B cell (primary cell): ENCODE measurements at regions of chr10 and their contacts with region 1.

Region 1: GRCh38 chr10:48634198-48634983 is 29.5 kb upstream of the ARHGAP22 start:
- DNase-seq: peak; percentile 86
- ATAC-seq: peak; percentile 100
- H3K4me3 ChIP-seq: peak overlapping the region in 2 of 5 experiments; percentile 7 to 25
- H3K4me3 Mint-ChIP-seq: peak overlapping the region; percentile 80
- H3K27ac ChIP-seq: no peak overlapping the region
- H3K27ac Mint-ChIP-seq: peak overlapping the region; percentile 47
- H3K4me1 ChIP-seq: peaks cover 37 to 40% of the 10 kb centered on the region in 2 donors
- H3K4me1 Mint-ChIP-seq: peaks cover 42% of the 10 kb centered on the region
- H3K27me3 ChIP-seq: peaks cover 0 to 31% (median 16%) of the 10 kb centered on the region in 4 experiments
- H3K27me3 Mint-ChIP-seq: peaks cover 33% of the 10 kb centered on the region
- CTCF ChIP-seq: no peak

Region 2: DNA sequence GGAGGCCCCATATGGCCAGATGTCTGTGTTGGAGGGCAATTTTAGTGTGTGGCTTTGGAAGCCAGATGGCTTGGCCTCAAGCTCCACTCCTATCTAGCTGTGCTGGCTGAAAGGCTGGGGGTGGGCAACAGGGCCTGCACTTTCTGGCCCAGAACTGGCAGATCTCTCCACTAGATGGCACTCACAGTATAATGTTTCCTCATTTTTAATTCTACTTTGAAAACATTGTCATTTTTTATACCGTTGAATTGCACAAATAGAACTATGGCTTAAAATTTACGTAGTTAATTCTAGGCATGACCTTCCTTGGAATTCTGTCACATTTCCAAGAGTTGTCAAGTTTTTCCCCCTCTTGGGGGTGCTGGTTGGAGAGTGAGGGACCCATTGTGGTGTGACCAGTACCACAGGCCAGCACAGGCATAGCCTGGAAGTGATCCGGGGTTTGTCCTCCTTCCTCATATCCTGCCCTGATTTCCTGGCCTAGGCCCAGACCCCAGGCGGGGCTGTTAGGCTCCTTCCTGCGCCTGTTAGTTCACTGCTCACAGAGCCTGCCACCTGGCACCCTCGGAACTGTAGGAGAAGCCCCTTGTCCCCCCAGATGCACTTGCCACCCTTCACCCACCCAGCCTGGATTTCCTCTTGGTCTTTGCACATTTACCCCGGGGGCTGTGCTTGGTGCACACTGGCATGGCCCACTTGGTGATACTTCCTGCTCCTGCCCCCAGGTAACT is 82.4 kb before region 1 on chr10:
- CTCF ChIA-PET with region 1: interaction called, 12 read pairs
- POLR2A ChIA-PET with region 1: no interaction called
- intact Hi-C with region 1: no loop called
- DNase-seq: peak; percentile 79
- ATAC-seq: peak; percentile 82
- H3K4me3 ChIP-seq: no peak overlapping the region
- H3K4me3 Mint-ChIP-seq: no peak overlapping the region
- H3K27ac ChIP-seq: no peak overlapping the region
- H3K27ac Mint-ChIP-seq: no peak overlapping the region
- H3K4me1 ChIP-seq: peaks cover 10 to 13% of the 10 kb centered on the region in 2 donors
- H3K4me1 Mint-ChIP-seq: peaks cover 14% of the 10 kb centered on the region
- H3K27me3 ChIP-seq: peaks cover 0 to 6% (median 0%) of the 10 kb centered on the region in 4 experiments
- H3K27me3 Mint-ChIP-seq: peaks cover 7% of the 10 kb centered on the region
- CTCF ChIP-seq: peak; percentile 94

Region 3: GRCh38 chr10:48577158-48577557 is 57.2 kb before region 1 on chr10:
- CTCF ChIA-PET with region 1: interaction called, 5 read pairs
- POLR2A ChIA-PET with region 1: interaction called, 5 read pairs
- intact Hi-C with region 1: loop called (anchors 1 kb)
- DNase-seq: peak; percentile 82
- ATAC-seq: peak; percentile 69
- H3K4me3 ChIP-seq: no peak overlapping the region
- H3K4me3 Mint-ChIP-seq: peak overlapping the region; percentile 58
- H3K27ac ChIP-seq: peak overlapping the region; percentile 91 to 94
- H3K27ac Mint-ChIP-seq: peak overlapping the region; percentile 85
- H3K4me1 ChIP-seq: peaks cover 73 to 85% of the 10 kb centered on the region in 2 donors
- H3K4me1 Mint-ChIP-seq: peaks cover 93% of the 10 kb centered on the region
- H3K27me3 ChIP-seq: no peaks in the 10 kb centered on the region
- H3K27me3 Mint-ChIP-seq: no peaks in the 10 kb centered on the region
- CTCF ChIP-seq: no peak

Region 4: DNA sequence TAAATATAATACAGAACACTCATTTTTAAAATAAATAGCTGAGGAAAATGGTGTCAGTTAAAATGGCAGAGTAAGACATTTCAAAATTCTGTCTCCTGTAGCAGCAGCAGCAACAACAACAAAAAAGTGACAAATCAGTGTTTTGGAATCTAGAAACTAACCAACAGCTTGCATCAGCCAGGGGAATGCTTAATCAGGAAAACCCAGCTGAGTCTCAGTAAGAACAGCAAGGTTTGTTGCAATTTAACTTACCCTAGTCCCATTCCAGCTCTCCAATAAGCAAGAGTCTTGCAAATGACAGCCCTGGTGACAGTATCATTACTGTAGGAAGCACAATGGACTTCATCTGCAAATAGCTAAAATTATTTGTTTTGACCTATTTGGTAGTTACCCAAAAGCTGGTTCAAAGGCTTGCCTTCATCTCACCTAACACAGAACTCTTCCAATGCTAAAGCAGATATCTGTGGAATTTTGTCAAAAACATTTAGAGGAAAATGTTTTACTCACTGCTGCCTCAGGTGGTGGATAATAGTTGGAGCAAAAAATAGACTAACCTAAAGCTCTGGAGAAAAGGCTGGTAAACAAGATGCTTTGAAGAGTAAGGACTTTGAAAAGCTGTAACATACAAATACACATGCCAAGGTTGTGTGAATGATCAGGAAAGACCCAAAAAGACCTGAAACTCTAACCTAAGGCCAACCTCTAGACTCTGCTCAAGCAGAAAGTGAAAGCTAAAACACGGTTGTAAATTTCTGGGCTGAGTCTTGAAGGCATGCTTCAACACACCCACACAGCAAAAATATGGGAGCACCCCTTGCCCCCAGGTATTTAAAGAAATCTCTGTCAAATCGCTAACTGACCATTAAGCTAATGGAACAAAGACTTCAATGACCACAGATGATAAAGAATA is 19.7 kb before region 1 on chr10:
- CTCF ChIA-PET with region 1: interaction called, 12 read pairs
- POLR2A ChIA-PET with region 1: no interaction called
- intact Hi-C with region 1: loop called (anchors 2 kb)
- DNase-seq: no peak
- ATAC-seq: peak; percentile 45
- H3K4me3 ChIP-seq: no peak overlapping the region
- H3K4me3 Mint-ChIP-seq: peak overlapping the region; percentile 30
- H3K27ac ChIP-seq: no peak overlapping the region
- H3K27ac Mint-ChIP-seq: no peak overlapping the region
- H3K4me1 ChIP-seq: peaks cover 3 to 8% of the 10 kb centered on the region in 2 donors
- H3K4me1 Mint-ChIP-seq: peaks cover 10% of the 10 kb centered on the region
- H3K27me3 ChIP-seq: peaks cover 0 to 2% (median 1%) of the 10 kb centered on the region in 4 experiments
- H3K27me3 Mint-ChIP-seq: peaks cover 28% of the 10 kb centered on the region
- CTCF ChIP-seq: peak; percentile 64

Region 5: DNA sequence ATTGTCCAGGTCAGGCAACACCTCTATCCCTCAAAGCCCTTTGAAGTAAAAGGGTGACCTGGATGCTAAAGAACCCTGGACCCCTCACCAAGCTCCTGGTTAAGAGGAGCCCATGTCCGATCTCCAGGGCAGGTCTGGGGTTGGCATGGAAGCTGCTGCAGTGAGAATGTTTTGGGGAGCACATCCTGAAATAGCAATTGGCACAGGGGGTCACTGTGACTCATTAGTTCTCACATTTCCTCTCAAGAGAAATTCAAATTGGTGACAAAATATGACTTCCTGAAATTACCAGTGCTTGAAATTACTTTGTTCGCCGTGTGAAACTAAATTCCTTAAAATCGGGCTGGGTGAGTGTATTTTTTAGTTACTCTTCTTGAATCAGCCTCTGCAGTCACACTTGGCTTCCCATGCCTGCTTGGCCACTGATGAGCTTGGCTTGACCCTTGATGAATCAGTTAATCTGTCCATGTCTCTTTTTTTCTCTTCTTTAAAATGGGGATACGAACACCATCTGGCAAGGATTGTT is 10.7 kb before region 1 on chr10:
- CTCF ChIA-PET with region 1: interaction called, 7 read pairs
- POLR2A ChIA-PET with region 1: interaction called, 13 read pairs
- intact Hi-C with region 1: no loop called
- DNase-seq: no peak
- ATAC-seq: no peak
- H3K4me3 ChIP-seq: no peak overlapping the region
- H3K4me3 Mint-ChIP-seq: peak overlapping the region; percentile 45
- H3K27ac ChIP-seq: no peak overlapping the region
- H3K27ac Mint-ChIP-seq: peak overlapping the region; percentile 35
- H3K4me1 ChIP-seq: peaks cover 32% of the 10 kb centered on the region in 2 donors
- H3K4me1 Mint-ChIP-seq: peaks cover 35% of the 10 kb centered on the region
- H3K27me3 ChIP-seq: peaks cover 0 to 20% (median 0%) of the 10 kb centered on the region in 4 experiments
- H3K27me3 Mint-ChIP-seq: peaks cover 14% of the 10 kb centered on the region
- CTCF ChIP-seq: no peak